ENCODE measurements at regions of chr16 and their contacts with region 1.

Region 1: GRCh38 chr16:67816240-67817031 is 9.7 kb downstream of the TSNAXIP1 start:
- DNase-seq: peak; percentile 75
- H3K4me3 Mint-ChIP-seq: no peak overlapping the region
- H3K27ac Mint-ChIP-seq: no peak overlapping the region
- H3K4me1 Mint-ChIP-seq: no peaks in the 10 kb centered on the region
- H3K27me3 Mint-ChIP-seq: no peaks in the 10 kb centered on the region
- CTCF ChIP-seq: peak; percentile 98

Region 2: GRCh38 chr16:67399181-67399733 is 417.2 kb before region 1 on chr16:
- CTCF ChIA-PET with region 1: no interaction called
- POLR2A ChIA-PET with region 1: no interaction called
- intact Hi-C with region 1: no loop called
- DNase-seq: no peak
- H3K4me3 Mint-ChIP-seq: no peak overlapping the region
- H3K27ac Mint-ChIP-seq: no peak overlapping the region
- H3K4me1 Mint-ChIP-seq: peaks cover 14% of the 10 kb centered on the region
- H3K27me3 Mint-ChIP-seq: no peaks in the 10 kb centered on the region
- CTCF ChIP-seq: no peak

Region 3: DNA sequence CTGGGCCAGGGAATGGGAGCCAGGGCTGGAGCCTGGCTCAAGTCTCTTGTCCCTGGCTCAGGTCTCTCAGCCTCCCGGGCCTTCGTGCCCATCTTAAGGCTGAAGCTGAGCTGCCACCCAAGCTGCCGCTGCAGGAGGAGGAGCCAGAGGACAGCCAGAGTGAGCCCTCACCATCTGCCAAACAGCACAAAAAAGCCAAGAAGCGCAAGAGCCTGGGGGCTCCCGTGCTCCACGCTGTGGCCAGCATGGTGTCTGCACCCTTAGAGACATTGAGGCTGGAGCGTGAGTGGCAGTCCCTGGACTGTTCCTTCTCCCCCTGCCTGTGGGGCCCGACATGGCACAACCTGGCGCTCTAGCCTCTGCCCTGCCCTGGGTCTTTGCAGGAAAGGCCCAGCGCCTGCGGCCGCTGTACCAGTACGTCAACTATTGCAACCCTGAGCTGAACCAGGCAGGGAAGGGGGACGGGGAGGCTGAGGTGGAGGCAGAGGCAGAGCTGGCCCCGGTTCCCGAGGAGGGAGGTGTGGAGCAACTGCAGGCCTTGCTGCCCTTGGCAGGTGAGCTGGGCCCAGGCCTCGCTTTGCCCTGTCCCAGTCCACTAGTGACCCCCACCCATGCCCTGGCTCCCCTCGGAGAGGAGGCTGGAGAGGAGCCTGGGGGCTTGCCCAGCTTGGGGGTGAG is 148.5 kb before region 1 on chr16:
- CTCF ChIA-PET with region 1: interaction called, 15 read pairs
- POLR2A ChIA-PET with region 1: no interaction called
- intact Hi-C with region 1: no loop called
- DNase-seq: peak; percentile 82
- H3K4me3 Mint-ChIP-seq: no peak overlapping the region
- H3K27ac Mint-ChIP-seq: no peak overlapping the region
- H3K4me1 Mint-ChIP-seq: peaks cover 7% of the 10 kb centered on the region
- H3K27me3 Mint-ChIP-seq: no peaks in the 10 kb centered on the region
- CTCF ChIP-seq: peak; percentile 63

Region 4: DNA sequence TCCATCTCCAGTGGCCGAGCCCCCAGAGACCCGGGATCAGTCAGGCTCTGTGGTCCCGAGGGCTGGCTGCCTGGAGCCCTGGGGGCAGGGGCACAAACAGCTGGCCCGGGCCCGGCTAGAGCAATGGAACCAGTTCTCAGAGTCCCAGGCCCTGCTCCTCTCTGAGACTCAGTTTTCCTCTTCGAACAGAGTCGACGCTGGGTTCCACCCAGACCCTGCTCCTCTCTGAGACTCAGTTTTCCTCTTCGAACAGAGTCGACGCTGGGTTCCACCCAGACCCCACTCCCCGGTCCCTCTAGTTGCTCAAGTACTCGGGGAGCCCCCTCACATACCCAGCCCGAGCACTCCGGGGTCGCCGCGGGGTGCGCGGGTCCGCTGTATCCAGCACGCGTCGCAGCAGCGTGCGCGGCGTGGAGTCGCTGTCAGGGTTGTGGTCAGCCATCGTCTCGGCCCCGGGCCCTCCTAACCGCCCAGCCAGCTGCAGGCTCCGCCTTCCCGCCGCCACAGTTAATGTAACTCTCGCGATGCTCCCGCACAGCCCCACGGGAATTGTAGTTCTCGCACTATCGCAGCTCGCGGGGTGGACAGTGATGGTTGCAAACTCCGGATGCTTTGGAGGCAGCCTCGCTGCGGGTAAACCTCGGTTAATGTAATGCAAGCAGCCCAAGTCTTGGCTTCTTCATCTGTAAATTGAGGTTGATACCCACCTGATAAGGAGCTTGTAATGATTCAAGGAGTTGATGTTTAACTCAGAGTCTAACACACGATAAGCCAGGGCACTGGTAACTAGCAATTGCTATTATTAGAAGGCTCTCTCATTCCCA is 17.2 kb after region 1 on chr16:
- CTCF ChIA-PET with region 1: interaction called, 12 read pairs
- POLR2A ChIA-PET with region 1: interaction called, 7 read pairs
- intact Hi-C with region 1: no loop called
- DNase-seq: peak; percentile 87
- H3K4me3 Mint-ChIP-seq: peak overlapping the region; percentile 93
- H3K27ac Mint-ChIP-seq: peak overlapping the region; percentile 91
- H3K4me1 Mint-ChIP-seq: peaks cover 9% of the 10 kb centered on the region
- H3K27me3 Mint-ChIP-seq: no peaks in the 10 kb centered on the region
- CTCF ChIP-seq: no peak

Region 5: GRCh38 chr16:67848118-67848517 is 31.7 kb after region 1 on chr16:
- CTCF ChIA-PET with region 1: interaction called, 45 read pairs
- POLR2A ChIA-PET with region 1: interaction called, 3 read pairs
- intact Hi-C with region 1: no loop called
- DNase-seq: no peak
- H3K4me3 Mint-ChIP-seq: peak overlapping the region; percentile 87
- H3K27ac Mint-ChIP-seq: peak overlapping the region; percentile 75
- H3K4me1 Mint-ChIP-seq: peaks cover 16% of the 10 kb centered on the region
- H3K27me3 Mint-ChIP-seq: no peaks in the 10 kb centered on the region
- CTCF ChIP-seq: no peak

Region 6: GRCh38 chr16:67923414-67924116 is 107.1 kb after region 1 on chr16:
- CTCF ChIA-PET with region 1: interaction called, 17 read pairs
- POLR2A ChIA-PET with region 1: interaction called, 3 read pairs
- intact Hi-C with region 1: loop called (anchors 1 kb)
- DNase-seq: no peak
- H3K4me3 Mint-ChIP-seq: no peak overlapping the region
- H3K27ac Mint-ChIP-seq: no peak overlapping the region
- H3K4me1 Mint-ChIP-seq: no peaks in the 10 kb centered on the region
- H3K27me3 Mint-ChIP-seq: no peaks in the 10 kb centered on the region
- CTCF ChIP-seq: no peak